ENCODE measurements at regions of chr2 and their contacts with region 1.

Region 1: DNA sequence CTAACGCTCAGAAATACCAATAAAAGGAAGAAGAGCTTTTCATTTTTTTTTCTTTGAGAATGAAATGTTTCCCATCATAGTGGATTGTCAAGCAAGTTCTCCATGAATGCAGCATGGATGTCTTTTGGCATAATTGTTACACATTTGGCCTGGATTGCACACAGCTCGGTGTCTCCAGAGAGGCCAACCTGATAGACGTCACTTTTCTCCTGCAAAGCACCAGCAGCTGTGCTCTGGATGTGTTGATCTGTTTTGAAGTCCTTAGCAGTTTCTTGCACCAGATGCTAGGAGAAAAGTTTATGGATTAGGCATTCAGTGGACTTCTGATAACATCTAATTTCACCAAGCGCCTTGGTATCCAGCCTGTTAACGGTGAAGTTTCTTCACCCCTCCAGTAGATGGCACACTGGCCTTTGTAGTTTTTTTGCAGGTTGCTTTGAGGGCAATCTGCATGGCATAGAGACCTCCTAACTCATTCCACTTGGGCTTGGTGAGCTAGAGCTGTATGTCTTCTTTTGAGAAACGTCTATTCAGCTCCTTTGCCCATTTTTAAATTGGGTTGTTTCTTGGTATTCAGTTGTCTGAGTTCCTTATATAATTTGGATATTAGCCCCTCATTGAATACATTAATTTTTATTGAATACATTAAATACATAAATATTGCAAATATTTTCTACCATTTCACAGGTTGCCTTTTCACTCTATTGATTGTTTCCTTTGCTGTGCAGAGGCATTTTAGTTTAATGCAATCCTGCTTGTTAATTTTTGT is 59.7 kb downstream of the PTH2R start:
- DNase-seq: no peak

Region 2: GRCh38 chr2:208511016-208511415 is 44.7 kb after region 1 on chr2:
- intact Hi-C with region 1: no loop called
- DNase-seq: no peak

Region 3: GRCh38 chr2:208671284-208671683 is 204.9 kb after region 1 on chr2:
- intact Hi-C with region 1: no loop called
- DNase-seq: no peak

Region 4: DNA sequence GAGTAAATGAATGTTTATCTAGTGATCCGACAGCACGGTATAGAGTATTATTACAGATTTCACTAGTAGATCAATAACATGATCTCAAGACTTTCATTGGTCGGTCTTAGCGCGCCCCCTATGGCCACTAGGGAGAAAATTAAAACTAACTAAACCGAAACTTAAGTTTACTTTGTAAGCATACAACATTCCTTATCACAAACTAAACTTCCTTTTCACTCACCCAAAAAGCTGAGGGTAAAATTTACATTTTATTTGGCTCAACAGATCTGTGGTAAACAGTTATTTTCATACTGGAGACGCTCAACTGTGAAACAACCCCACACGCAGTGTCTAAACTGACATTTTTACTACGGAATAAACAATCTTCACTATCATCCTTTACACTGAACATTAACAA is 741.9 kb after region 1 on chr2:
- intact Hi-C with region 1: loop called (anchors 10 kb)
- DNase-seq: no peak